Panc1 (cell line): ENCODE measurements at regions of chr3 and their contacts with region 1.

Region 1: GRCh38 chr3:119741657-119742590 is 39.1 kb downstream of the CFAP91 start:
- DNase-seq: no peak
- ATAC-seq: no peak
- H3K4me3 ChIP-seq: no peak overlapping the region
- H3K27ac ChIP-seq: no peak overlapping the region
- H3K4me1 ChIP-seq: no peaks in the 10 kb centered on the region
- H3K27me3 ChIP-seq: no peaks in the 10 kb centered on the region; the same call in 1 of the 2 replicates
- CTCF ChIP-seq: no peak

Region 2: GRCh38 chr3:119819806-119820205 is 77.9 kb after region 1 on chr3:
- CTCF ChIA-PET with region 1: interaction called, 11 read pairs
- POLR2A ChIA-PET with region 1: no interaction called
- in situ Hi-C with region 1: no loop called
- intact Hi-C with region 1: no loop called
- DNase-seq: no peak
- ATAC-seq: no peak
- H3K4me3 ChIP-seq: no peak overlapping the region
- H3K27ac ChIP-seq: no peak overlapping the region
- H3K4me1 ChIP-seq: no peaks in the 10 kb centered on the region
- H3K27me3 ChIP-seq: no peaks in the 10 kb centered on the region
- CTCF ChIP-seq: no peak

Region 3: DNA sequence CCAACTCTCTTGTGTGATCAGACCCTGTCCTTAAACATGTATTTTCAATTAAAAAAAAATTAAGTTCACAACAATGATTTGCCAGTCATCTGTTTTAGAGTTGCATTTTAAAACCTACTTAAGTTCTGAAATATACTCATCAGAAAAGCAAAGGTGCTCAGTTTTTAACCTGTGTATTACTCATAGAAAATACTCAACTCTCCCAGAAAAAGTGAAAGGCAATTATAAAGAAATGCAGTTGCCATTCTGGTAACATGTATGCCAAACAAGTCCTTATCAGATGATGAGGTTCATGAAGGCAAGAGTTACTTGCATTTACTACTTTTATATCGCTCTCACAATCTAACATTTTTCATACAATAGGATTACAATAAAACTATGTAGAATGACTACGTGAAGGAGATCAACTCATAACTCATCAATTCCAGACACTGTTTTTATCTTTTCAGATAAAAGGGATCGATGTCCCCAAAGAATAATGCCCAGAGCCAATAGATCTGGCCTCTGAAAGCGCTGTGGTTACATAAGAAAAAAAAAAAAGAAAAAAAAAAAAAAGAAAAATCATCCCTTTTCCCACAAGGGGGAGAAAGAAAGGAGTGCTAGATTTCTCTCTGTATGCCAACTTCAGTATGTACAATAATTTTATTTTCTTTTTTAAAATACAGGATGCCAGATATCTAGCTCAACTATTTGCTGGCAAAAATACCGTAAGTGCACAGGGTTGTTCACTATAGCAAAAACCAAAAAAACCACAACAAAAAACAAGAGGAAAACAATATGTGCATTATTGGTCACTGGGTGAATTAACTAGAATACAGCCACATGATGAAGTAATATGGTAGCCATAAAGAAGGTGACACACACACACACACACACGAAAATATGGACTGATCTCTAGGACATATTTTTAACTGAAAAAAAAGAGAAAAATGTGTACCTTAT is 177.3 kb after region 1 on chr3:
- CTCF ChIA-PET with region 1: no interaction called
- POLR2A ChIA-PET with region 1: no interaction called
- in situ Hi-C with region 1: no loop called
- intact Hi-C with region 1: no loop called
- DNase-seq: no peak
- ATAC-seq: no peak
- H3K4me3 ChIP-seq: no peak overlapping the region
- H3K27ac ChIP-seq: no peak overlapping the region
- H3K4me1 ChIP-seq: no peaks in the 10 kb centered on the region
- H3K27me3 ChIP-seq: no peaks in the 10 kb centered on the region
- CTCF ChIP-seq: no peak